Activated T-helper 1 cell treated with anti-CD3 and anti-CD28 coated beads, Interleukin-12 subunit alpha, Interleukin-12 subunit beta, Interleukin-2, Interleukin-4 antibody, amounts not matched to agents 30 ng/mL and 10 ng/mL and 1 ng/mL, durations not matched to agents 14 hours and 24 hours and 36 hours (primary cell): ENCODE measurements at regions of chr7 and their contacts with region 1.

Region 1: DNA sequence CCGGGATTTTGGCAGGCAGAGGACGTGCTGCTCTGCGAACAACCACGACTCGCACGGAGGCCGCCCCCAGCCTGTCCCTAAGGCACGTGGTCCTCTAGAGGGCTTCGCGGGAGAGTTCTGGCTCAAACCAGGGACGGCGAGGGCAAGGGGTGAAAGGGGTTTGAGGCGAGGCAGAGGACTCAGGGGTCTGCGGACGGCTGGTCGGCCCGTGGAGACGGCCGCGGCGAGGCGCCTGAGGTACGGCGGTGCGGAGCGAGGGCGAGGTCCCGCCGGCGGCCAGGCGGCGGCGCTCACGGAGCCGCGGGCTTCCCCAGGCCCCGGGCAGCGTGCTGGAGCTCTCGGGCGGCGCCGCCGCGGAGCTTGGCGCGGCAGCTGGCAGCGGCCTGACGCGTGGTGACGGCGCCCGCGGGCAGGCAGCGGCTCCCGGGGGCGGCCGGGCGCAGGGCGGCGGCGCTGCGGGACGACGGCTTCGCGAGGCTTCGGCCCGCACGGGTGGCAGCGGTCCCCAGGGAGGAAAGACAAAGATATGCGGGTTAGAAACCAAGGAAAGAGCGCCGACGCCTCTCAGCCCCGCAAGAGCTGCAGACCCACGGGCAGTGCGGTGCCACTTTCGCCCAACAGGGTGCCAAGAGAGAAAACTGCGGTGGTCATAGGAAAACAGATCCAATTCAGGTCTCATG is 44.8 kb downstream of the ZNF800 start:
- DNase-seq: peak; percentile 59
- H3K4me3 Mint-ChIP-seq: peak overlapping the region; percentile 25
- H3K27ac Mint-ChIP-seq: no peak overlapping the region
- H3K4me1 Mint-ChIP-seq: peaks cover 7% of the 10 kb centered on the region
- H3K27me3 Mint-ChIP-seq: peaks cover 24% of the 10 kb centered on the region

Region 2: GRCh38 chr7:127330070-127330469 is 17.6 kb before region 1 on chr7:
- intact Hi-C with region 1: no loop called
- DNase-seq: no peak
- H3K4me3 Mint-ChIP-seq: no peak overlapping the region
- H3K27ac Mint-ChIP-seq: no peak overlapping the region
- H3K4me1 Mint-ChIP-seq: no peaks in the 10 kb centered on the region
- H3K27me3 Mint-ChIP-seq: peaks cover 38% of the 10 kb centered on the region

Region 3: DNA sequence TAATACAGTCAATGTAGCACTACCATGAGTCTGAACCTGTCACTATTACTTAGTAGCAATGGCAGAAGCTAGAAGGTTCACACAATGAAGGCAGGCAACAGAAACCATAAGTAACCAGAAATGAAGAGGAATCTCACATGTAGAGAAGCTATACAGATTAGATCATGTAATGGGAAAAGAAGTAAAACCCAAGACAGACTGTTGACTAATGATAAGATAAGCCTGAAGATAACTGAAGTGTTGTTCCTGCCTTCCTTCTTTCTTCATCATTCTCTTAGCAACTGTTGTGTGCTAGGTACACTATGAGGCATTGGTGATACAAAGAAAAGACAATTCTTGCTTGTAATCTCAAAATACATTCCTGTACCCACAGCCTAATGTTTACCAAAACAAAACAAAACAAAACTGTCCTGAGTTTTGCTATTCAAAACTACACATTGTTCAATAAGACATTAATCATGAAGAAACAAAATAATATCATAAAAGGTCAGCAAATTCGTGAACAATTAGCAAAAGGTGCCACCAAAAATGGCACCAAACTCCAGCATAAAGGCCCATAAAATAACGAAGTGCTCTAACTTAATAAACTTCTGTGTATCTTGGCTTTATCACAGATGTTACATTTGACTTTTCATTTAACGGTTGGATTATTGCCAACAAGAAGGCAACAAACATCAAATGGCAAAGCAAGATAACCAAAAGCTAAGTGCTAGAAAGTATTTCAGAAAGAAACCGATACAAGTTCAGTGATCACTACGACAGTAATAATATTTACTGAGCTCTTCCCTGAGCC is 17.7 kb after region 1 on chr7:
- intact Hi-C with region 1: no loop called
- DNase-seq: no peak
- H3K4me3 Mint-ChIP-seq: no peak overlapping the region
- H3K27ac Mint-ChIP-seq: no peak overlapping the region
- H3K4me1 Mint-ChIP-seq: peaks cover 10% of the 10 kb centered on the region
- H3K27me3 Mint-ChIP-seq: no peaks in the 10 kb centered on the region

Region 4: GRCh38 chr7:127413962-127414361 is 66.3 kb after region 1 on chr7:
- intact Hi-C with region 1: loop called (anchors 2 kb)
- DNase-seq: no peak
- H3K4me3 Mint-ChIP-seq: peak overlapping the region; percentile 62
- H3K27ac Mint-ChIP-seq: peak overlapping the region; percentile 66
- H3K4me1 Mint-ChIP-seq: peaks cover 54% of the 10 kb centered on the region
- H3K27me3 Mint-ChIP-seq: peaks cover 20% of the 10 kb centered on the region

Region 5: DNA sequence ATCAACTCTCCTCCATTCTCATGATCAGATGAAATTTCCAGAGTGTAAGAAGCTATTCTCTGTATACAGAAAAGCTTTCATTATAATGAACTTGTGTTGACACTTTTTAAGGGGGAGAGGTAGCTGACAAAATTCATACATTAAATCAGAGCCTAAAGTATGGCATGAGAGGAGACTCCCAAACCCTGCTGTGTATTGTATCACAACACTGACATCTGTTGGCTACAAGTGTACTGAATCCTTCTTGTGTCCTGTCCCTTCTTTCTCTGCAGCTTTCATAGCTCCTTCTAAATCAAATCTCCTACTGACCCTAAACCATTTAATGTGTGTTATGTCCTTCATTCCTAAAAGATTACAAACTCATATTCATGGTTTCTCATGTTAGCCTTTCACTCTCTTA is 166.8 kb after region 1 on chr7:
- intact Hi-C with region 1: loop called (anchors 5 kb)
- DNase-seq: no peak
- H3K4me3 Mint-ChIP-seq: no peak overlapping the region
- H3K27ac Mint-ChIP-seq: no peak overlapping the region
- H3K4me1 Mint-ChIP-seq: no peaks in the 10 kb centered on the region
- H3K27me3 Mint-ChIP-seq: peaks cover 10% of the 10 kb centered on the region

Region 6: DNA sequence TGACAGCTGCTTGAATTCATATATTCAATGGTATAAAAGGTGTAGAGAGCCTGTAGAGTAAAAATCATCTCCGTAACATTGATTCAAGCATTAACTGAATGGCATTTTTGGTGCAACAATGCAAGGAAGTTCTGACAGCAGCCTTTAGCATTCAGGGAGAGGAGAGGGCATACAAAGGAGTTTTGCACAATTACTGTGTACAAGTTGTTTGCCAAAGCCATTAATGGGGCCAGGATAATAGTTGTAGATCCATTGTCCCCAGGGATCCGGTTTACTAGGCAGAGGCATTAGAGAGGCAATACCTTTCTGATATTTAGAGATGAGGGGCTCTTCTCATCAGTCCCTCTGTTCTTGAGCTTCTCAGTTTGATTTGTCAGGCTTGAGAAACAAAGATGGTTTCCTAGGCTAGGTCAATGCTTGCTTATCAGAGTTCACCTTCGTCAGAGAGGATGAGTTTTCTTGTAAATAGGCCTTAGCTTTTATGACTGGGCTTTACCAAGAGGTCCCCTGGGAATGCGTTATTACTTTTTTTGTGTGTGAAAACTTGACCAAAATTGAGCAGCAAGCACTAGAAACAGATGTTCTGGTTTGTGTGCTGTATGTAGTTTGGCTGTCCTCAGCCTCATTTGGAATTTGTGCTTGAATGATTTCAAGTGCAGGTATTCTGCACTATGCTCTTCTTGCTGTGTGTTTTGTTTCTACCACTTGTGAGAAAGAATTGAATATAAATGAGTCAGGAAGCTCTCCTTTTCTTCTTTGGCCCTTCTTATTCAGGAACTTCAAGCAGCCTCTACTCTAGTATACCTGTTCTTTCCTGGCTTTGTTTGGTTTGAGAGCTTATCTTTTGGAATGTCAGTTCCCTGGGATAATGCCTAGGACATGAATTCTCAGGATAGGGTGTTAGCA is 336.3 kb after region 1 on chr7:
- intact Hi-C with region 1: no loop called
- DNase-seq: no peak
- H3K4me3 Mint-ChIP-seq: no peak overlapping the region
- H3K27ac Mint-ChIP-seq: no peak overlapping the region
- H3K4me1 Mint-ChIP-seq: peaks cover 60% of the 10 kb centered on the region
- H3K27me3 Mint-ChIP-seq: no peaks in the 10 kb centered on the region